MCF 10A (cell line): ENCODE measurements at regions of chr20 and their contacts with region 1.

Region 1: GRCh38 chr20:5072756-5073659 is 46.8 kb downstream of the PCNA start:
- DNase-seq: peak; percentile 99
- H3K4me3 Mint-ChIP-seq: peak overlapping the region; percentile 47
- H3K27ac Mint-ChIP-seq: peak overlapping the region; percentile 90
- H3K4me1 Mint-ChIP-seq: peaks cover 27% of the 10 kb centered on the region
- H3K27me3 Mint-ChIP-seq: no peaks in the 10 kb centered on the region
- CTCF ChIP-seq: no peak

Region 2: DNA sequence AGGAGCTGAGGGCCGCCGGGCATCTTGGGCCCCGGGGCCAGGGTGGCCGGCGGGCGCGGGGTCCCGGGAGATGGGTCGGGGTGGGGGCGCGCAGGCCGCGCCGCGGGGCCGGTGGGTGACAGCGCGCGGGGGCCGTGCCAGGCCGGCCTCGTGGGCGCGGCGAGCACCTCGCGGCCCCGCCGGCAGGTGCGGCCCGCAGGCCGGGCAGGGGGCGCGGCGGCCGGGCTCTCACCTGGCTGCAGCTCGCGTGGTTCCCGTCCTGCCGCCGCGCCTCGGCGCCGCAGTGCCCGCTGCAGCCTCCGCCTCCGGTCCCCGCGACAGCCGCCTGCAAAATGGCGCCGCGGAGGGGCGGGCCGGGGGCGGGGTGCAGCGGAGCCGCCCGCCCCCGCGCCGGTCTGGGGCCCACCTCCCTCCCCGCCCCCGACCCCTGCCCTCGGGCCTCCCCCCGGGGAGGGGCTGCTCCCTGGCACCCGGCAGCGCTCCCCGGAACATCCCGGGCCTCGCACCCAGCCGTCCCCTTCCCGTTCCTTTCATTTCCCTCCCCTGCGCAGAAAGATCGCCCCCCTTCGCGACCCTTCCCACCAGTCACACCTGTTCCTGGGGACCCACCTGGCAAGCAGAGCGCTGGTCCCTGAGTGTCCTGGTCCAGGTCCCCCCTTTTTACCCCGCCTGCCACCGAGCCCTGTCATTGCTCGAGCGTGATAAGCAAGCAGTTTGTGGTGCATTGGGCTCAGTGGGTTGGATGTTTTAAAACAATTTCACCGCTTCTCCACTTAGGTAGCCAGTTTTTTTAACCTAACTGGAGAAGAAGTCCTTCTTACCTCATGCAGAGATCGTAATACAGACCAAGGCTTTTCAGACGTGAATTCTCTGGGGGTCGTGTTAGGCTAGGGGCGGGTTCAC is 71.6 kb before region 1 on chr20 and contains the start of gene SLC23A2:
- CTCF ChIA-PET with region 1: no interaction called
- POLR2A ChIA-PET with region 1: interaction called, 19 read pairs
- intact Hi-C with region 1: loop called (anchors 10 kb)
- DNase-seq: no peak
- H3K4me3 Mint-ChIP-seq: peak within 1 kb of the TSS; percentile 85
- H3K27ac Mint-ChIP-seq: peak within 1 kb of the TSS; percentile 81
- H3K4me1 Mint-ChIP-seq: peaks cover 20% of the 10 kb centered on the region
- H3K27me3 Mint-ChIP-seq: no peaks in the 10 kb centered on the region
- CTCF ChIP-seq: no peak
- total RNA-seq, gene SLC23A2: 24.0 and 26.5 TPM in 2 replicates

Region 3: GRCh38 chr20:5033571-5033970 is 39.4 kb before region 1 on chr20:
- CTCF ChIA-PET with region 1: interaction called, 6 read pairs
- POLR2A ChIA-PET with region 1: interaction called, 10 read pairs
- intact Hi-C with region 1: no loop called
- DNase-seq: peak; percentile 15
- H3K4me3 Mint-ChIP-seq: no peak overlapping the region
- H3K27ac Mint-ChIP-seq: peak overlapping the region; percentile 78
- H3K4me1 Mint-ChIP-seq: peaks cover 4% of the 10 kb centered on the region
- H3K27me3 Mint-ChIP-seq: no peaks in the 10 kb centered on the region
- CTCF ChIP-seq: no peak

Region 4: DNA sequence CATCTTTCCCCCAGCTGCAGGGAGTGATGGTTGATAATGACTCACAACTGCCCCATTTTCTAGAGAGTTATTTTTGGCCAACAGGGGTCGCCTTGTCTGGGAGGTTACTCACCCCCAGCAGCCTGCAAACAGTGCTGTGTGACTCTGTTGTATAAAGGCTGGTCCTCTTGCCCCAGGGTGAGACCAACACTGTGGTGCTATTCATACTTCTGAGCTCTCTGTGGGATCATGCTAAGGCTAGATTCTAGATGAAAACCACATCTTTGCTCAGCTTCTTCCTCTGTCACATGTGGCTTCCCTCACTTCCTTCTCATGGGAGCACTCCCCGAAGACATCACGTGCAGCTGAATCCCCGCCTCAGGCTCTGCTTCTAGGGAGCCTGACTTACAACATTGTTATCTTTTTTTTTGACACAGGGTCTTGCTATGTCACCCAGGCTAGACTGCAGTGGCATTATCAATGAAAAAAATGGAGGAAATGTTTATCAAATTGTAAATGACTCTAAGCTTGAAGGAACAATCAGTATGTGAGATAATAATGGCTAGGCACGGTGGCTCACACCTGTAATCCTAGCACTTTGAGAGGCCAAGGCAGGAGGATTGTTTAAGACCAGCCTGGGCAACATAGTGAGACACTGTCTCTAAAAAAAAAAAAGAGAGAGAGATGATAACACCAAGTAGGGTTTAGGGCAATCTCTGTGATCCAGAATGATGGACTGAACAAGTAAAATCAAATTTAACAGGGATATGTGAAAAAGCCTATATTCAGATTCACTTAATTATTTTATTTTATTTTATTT is 16.0 kb before region 1 on chr20:
- CTCF ChIA-PET with region 1: interaction called, 5 read pairs
- POLR2A ChIA-PET with region 1: interaction called, 27 read pairs
- intact Hi-C with region 1: no loop called
- DNase-seq: peak; percentile 65
- H3K4me3 Mint-ChIP-seq: no peak overlapping the region
- H3K27ac Mint-ChIP-seq: no peak overlapping the region
- H3K4me1 Mint-ChIP-seq: peaks cover 12% of the 10 kb centered on the region
- H3K27me3 Mint-ChIP-seq: no peaks in the 10 kb centered on the region
- CTCF ChIP-seq: peak; percentile 33

Region 5: DNA sequence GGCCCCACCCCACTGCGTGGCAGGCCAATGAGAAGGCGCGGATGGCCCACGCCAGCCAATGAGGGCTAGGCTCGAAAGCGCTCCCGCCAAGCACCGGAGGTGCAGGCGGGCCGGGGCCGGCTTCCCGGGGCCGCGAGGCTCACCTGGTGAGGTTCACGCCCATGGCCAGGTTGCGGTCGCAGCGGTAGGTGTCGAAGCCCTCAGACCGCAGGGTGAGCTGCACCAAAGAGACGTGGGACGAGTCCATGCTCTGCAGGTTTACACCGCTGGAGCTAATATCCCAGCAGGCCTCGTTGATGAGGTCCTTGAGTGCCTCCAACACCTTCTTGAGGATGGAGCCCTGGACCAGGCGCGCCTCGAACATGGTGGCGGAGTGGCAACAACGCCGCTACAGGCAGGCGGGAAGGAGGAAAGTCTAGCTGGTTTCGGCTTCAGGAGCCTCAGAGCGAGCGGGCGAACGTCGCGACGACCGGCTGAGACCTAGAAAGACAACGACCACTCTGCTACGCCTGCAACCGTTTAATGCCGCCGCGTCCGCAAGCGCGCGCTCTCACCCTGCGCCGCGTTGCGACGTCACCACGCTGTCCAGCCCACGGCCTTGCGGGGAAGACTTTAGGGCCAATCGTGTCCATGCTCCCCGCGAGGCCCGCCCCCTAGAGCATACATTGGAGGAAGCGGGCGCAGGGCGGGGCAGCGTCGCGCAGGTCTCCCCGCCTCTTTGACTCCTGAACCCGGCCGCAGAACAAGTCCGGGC is 46.6 kb after region 1 on chr20 and contains the start of gene PCNA:
- CTCF ChIA-PET with region 1: interaction called, 3 read pairs
- POLR2A ChIA-PET with region 1: interaction called, 16 read pairs
- intact Hi-C with region 1: no loop called
- DNase-seq: peak; percentile 98
- H3K4me3 Mint-ChIP-seq: peak within 1 kb of the TSS; percentile 90
- H3K27ac Mint-ChIP-seq: peak within 1 kb of the TSS; percentile 92
- H3K4me1 Mint-ChIP-seq: peaks cover 21% of the 10 kb centered on the region
- H3K27me3 Mint-ChIP-seq: no peaks in the 10 kb centered on the region
- CTCF ChIP-seq: no peak
- total RNA-seq, gene PCNA: 38.2 and 45.5 TPM in 2 replicates

Region 6: DNA sequence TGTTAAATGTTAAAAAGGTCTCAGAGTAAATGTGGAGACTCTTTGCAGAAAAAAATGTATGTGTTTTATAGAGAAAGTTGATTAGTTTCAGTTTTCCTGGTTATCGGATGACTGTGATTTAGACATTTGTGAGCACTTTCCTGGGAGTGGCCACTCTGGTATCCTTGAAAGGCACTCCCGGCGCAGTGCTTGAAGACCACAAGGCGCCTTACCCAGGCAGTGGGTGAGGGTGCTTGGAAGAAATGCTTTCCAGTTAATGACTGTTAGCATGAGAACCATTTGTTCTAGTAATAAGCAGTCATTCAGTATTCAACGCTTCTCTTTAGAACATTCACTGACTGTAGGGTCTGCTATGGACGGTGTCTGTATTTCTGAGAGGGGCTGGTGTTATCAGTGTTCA is 61.0 kb after region 1 on chr20:
- CTCF ChIA-PET with region 1: no interaction called
- POLR2A ChIA-PET with region 1: no interaction called
- intact Hi-C with region 1: no loop called
- DNase-seq: no peak
- H3K4me3 Mint-ChIP-seq: no peak overlapping the region
- H3K27ac Mint-ChIP-seq: no peak overlapping the region
- H3K4me1 Mint-ChIP-seq: no peaks in the 10 kb centered on the region
- H3K27me3 Mint-ChIP-seq: no peaks in the 10 kb centered on the region
- CTCF ChIP-seq: no peak